HCT116 (cell line): ENCODE measurements at regions of chr2 and their contacts with region 1.

Region 1: GRCh38 chr2:1591978-1592907 is 152.1 kb downstream of the PXDN start:
- DNase-seq: peak; percentile 41
- ATAC-seq: peak; percentile 68
- H3K4me3 ChIP-seq: no peak overlapping the region
- H3K27ac ChIP-seq: no peak overlapping the region
- H3K4me1 ChIP-seq: peaks cover 11 to 19% of the 10 kb centered on the region in 2 experiments
- H3K27me3 ChIP-seq: peaks cover 39% of the 10 kb centered on the region
- CTCF ChIP-seq: peak; percentile 54 to 94 (median 60)
- POLR2A ChIP-seq: no peak
- RAD21 ChIP-seq: peak; percentile 84

Region 2: DNA sequence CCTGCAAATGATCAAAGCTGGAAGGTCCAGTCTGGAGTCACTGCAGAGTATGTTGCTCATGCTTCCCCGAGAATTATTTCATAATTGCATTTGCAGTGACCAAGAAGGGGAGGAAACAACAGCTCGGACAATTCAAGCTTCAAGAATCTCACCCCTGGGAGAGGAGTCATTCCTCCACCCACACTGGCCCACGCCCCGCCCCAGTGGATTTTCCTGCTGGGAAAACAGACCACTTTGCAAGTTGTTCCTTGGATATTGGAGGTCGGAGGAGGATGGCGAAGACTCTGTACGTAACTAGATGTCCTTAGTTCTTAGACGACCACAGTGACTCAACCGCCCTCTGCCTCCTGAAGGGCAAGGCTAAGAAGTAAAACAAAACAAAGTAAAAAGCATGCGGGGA is 19.6 kb before region 1 on chr2:
- CTCF ChIA-PET with region 1: no interaction called
- POLR2A ChIA-PET with region 1: no interaction called
- RAD21 ChIA-PET with region 1: no interaction called
- intact Hi-C with region 1: no loop called
- DNase-seq: no peak
- ATAC-seq: no peak
- H3K4me3 ChIP-seq: no peak overlapping the region
- H3K27ac ChIP-seq: no peak overlapping the region
- H3K4me1 ChIP-seq: no peaks in the 10 kb centered on the region
- H3K27me3 ChIP-seq: peaks cover 57% of the 10 kb centered on the region
- CTCF ChIP-seq: no peak
- POLR2A ChIP-seq: no peak
- RAD21 ChIP-seq: no peak

Region 3: DNA sequence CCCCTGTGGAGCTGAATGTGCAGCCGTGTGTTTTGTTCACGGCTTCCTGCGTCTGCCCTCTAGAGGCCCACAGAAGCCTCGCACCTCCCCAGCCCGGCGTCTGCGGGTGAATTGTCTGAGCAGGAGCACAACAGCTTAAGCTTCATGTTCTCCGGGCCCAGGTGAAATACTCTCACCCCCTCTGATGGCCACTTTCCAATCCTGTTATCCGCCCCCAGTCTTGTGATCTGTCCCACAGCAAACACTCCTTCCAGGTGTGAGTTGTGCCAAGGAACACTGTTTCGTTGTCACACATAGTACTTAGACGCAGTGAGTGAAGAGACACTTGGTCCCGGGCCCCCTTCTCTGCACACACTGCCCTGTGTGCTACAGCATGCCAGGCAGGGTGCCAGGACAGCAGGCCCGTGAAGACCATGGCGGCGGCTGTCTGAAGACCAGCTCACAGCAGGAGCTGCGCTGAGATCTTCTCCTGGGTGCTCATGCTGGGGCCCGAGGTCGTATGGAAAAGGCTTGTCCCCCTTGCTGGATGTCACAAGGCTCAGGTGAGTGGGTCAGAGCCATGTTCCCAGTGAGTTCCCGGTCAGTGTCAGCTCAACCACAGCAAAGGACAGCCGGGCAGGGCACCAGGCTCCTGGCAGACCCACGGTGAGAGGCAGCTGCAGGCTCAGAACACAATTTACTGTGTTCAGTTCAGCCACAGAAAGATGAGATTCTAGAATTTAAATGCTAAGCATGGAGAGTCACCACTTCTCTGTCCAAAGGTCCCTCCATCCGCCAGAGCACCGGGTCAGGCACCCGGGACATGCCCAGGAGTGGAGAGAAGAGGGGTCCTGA is 158.9 kb after region 1 on chr2:
- CTCF ChIA-PET with region 1: interaction called, 10 read pairs
- POLR2A ChIA-PET with region 1: no interaction called
- RAD21 ChIA-PET with region 1: interaction called in 1 of 2 experiments, 7 read pairs
- intact Hi-C with region 1: loop called (anchors 5 kb)
- DNase-seq: peak; percentile 42
- ATAC-seq: peak; percentile 94
- H3K4me3 ChIP-seq: no peak overlapping the region
- H3K27ac ChIP-seq: no peak overlapping the region
- H3K4me1 ChIP-seq: no peaks in the 10 kb centered on the region; a peak in 1 of 4 replicates
- H3K27me3 ChIP-seq: 0 out of 2 replicates have a peak, but pooled peaks cover 5% of the 10 kb centered on the region
- CTCF ChIP-seq: peak; percentile 42 to 87 (median 77)
- POLR2A ChIP-seq: no peak
- RAD21 ChIP-seq: peak; percentile 60

Region 4: DNA sequence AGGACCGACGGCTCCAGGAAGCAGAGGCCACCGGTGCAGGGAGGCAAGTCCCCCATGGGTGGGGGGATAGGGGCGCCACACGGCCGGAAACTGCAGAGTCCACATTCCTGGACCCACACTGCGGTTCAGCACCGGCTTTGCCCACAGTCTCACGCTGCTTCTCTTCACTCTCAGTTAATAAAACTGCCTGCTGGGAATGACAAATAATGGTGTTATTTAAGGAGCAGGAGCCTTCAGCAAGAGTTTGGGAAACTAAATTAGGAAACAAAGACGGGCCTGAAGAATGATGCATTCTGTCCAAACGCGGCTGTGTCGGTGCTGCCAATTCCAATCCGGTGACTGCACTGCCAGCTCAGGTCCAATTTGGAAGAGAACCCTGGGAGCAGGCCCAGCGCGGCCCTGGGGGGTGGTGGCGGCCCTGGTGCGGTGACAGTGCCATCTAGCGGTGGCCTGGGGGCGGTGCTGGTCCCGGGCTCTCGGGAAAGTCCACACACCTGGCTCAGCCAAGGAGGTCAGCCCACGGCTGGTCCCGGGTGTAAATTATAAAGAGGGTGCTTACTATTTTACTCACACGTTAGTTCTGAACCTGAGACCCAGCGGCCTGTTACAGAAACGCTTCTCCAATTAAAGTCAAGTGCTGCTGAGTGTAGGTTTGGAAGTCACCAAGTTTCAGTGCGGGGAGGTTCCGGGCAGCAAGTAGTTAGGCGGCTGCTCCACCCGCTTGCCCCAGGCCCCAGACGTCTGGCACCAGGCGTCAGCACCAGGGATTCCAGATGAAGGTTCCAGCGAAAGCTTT is 225.2 kb after region 1 on chr2:
- CTCF ChIA-PET with region 1: no interaction called
- POLR2A ChIA-PET with region 1: no interaction called
- RAD21 ChIA-PET with region 1: no interaction called
- intact Hi-C with region 1: loop called (anchors 5 kb)
- DNase-seq: peak; percentile 8
- ATAC-seq: peak; percentile 99
- H3K4me3 ChIP-seq: no peak overlapping the region
- H3K27ac ChIP-seq: no peak overlapping the region
- H3K4me1 ChIP-seq: peaks cover 4% of the 10 kb centered on the region in 2 experiments
- H3K27me3 ChIP-seq: no peaks in the 10 kb centered on the region
- CTCF ChIP-seq: peak; percentile 47 to 97 (median 95)
- POLR2A ChIP-seq: no peak
- RAD21 ChIP-seq: peak; percentile 76